Common myeloid progenitor, CD34-positive (primary cell): ENCODE measurements at regions of chr11 and their contacts with region 1.

Region 1: GRCh38 chr11:4072668-4073285 is 21.8 kb upstream of the RRM1 start:
- DNase-seq: peak; percentile 80 to 88 (median 83)
- H3K4me3 ChIP-seq: no peak overlapping the region
- H3K27ac ChIP-seq: no peak overlapping the region
- H3K4me1 ChIP-seq: peaks cover 13 to 40% (median 30%) of the 10 kb centered on the region in 4 experiments
- H3K27me3 ChIP-seq: no peaks in the 10 kb centered on the region

Region 2: GRCh38 chr11:3824714-3825472 is 247.9 kb before region 1 on chr11:
- CTCF ChIA-PET with region 1: interaction called, 16 read pairs
- POLR2A ChIA-PET with region 1: no interaction called
- DNase-seq: peak; percentile 85 to 91 (median 89)
- H3K4me3 ChIP-seq: no peak overlapping the region
- H3K27ac ChIP-seq: peak overlapping the region in 1 of 2 experiments; percentile 44
- H3K4me1 ChIP-seq: peaks cover under 1 to 13% (median 6%) of the 10 kb centered on the region in 4 experiments
- H3K27me3 ChIP-seq: no peaks in the 10 kb centered on the region

Region 3: GRCh38 chr11:3834664-3835461 is 237.9 kb before region 1 on chr11:
- CTCF ChIA-PET with region 1: interaction called, 423 read pairs
- POLR2A ChIA-PET with region 1: no interaction called
- DNase-seq: peak; percentile 56 to 74 (median 68)
- H3K4me3 ChIP-seq: peak overlapping the region in 6 of 7 experiments; percentile 26 to 65 (median 49)
- H3K27ac ChIP-seq: peak overlapping the region; percentile 58 to 77
- H3K4me1 ChIP-seq: peaks cover 60 to 98% (median 94%) of the 10 kb centered on the region in 4 experiments
- H3K27me3 ChIP-seq: no peaks in the 10 kb centered on the region

Region 4: DNA sequence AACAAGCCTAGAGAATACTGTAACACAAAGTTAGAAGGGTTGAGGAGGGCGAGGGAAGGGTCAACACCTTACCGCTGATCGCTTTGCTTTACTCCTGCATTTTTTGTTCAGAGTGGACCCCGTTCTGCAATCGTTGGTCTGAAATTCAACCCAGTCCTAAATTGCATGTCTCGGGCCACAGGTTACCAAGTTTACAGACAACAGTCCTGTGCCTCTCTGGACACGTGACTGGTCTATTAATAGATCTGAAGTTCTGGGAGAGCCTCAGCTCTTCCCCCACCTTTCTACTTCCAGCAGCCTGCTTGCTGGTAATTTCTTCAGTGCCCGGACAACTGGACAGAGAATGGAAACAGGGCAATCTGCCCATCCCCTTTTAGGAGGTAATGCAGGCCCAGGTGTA is 143.1 kb before region 1 on chr11:
- CTCF ChIA-PET with region 1: interaction called, 18 read pairs
- POLR2A ChIA-PET with region 1: no interaction called
- DNase-seq: no peak
- H3K4me3 ChIP-seq: no peak overlapping the region
- H3K27ac ChIP-seq: no peak overlapping the region
- H3K4me1 ChIP-seq: peaks cover 6 to 22% (median 10%) of the 10 kb centered on the region in 4 experiments
- H3K27me3 ChIP-seq: no peaks in the 10 kb centered on the region

Region 5: GRCh38 chr11:3939211-3939610 is 133.6 kb before region 1 on chr11:
- CTCF ChIA-PET with region 1: interaction called, 14 read pairs
- POLR2A ChIA-PET with region 1: no interaction called
- DNase-seq: peak in 1 of 3 donors; percentile 24
- H3K4me3 ChIP-seq: no peak overlapping the region
- H3K27ac ChIP-seq: no peak overlapping the region
- H3K4me1 ChIP-seq: peaks cover 13 to 34% (median 27%) of the 10 kb centered on the region in 4 experiments
- H3K27me3 ChIP-seq: no peaks in the 10 kb centered on the region

Region 6: DNA sequence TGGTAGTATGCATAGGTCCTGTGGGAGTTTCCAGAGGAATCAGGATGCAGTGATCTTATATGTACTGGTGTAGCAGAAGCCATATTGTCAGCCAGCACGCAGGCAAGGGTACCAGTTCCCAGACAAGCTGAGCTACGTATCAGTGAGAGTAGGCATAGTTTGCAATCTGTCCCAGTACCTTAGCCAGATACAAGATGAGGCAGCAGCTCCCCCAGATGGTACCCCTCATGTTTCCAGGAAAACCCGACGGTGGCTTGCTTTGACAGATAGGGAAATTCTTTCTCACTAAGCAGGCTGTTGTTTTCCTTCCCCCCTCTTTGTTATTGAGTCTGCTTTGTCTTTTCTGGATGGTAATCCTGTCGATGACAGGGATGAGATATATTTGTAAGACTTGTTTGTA is 87.9 kb before region 1 on chr11:
- CTCF ChIA-PET with region 1: interaction called, 20 read pairs
- POLR2A ChIA-PET with region 1: no interaction called
- DNase-seq: peak; percentile 76 to 82 (median 78)
- H3K4me3 ChIP-seq: peak overlapping the region in 1 of 7 experiments; percentile 6
- H3K27ac ChIP-seq: no peak overlapping the region
- H3K4me1 ChIP-seq: peaks cover 0 to 31% (median 24%) of the 10 kb centered on the region in 4 experiments
- H3K27me3 ChIP-seq: no peaks in the 10 kb centered on the region

Region 7: DNA sequence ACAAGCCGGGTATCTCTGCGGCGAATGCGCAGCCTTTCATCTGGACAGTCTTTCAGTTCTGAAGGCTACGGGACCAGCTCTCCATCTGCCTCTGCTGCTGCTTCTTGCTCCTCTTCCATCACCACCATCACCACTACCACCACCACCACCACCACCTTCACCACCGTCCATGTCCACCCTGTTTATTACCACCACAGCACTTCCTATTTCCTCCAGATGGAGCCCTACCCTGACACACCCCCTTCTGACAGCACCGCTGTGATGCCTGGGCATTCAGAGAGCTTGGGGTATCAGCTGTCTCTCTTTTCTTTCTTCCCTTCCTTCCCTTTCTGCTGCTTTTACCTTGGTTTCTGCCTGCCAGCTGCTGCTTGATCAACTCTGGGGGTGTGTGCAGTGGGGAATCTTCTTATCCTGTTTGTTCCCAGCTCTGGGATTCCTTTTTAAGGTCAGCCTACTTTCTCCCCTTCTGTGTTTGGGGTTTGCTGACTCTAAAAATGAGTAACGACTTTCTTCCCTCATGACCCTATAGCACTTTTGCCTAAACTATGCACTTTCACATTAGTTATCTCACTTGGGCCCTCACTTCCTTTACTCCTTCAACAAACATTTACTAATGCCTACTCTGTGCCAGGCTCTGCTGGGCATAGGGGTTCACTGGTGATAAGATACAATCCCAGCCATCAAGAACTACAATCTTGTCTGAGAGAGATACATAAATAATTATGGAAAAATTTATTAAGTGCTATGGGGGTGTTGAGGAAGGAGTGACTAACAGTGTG is 14.0 kb after region 1 on chr11:
- CTCF ChIA-PET with region 1: interaction called, 30 read pairs
- POLR2A ChIA-PET with region 1: no interaction called
- DNase-seq: peak in 2 of 3 donors; percentile 53 to 58
- H3K4me3 ChIP-seq: no peak overlapping the region
- H3K27ac ChIP-seq: no peak overlapping the region
- H3K4me1 ChIP-seq: peaks cover 0 to 22% (median 5%) of the 10 kb centered on the region in 4 experiments
- H3K27me3 ChIP-seq: no peaks in the 10 kb centered on the region